ENCODE measurements at regions of chr1 and their contacts with region 1.

Region 1: GRCh38 chr1:35726450-35727433 is 8.1 kb upstream of the C1orf216 start:
- DNase-seq: no peak
- H3K4me3 ChIP-seq: no peak overlapping the region
- H3K27ac ChIP-seq: no peak overlapping the region
- H3K4me1 ChIP-seq: peaks cover 0 to 9% (median 8%) of the 10 kb centered on the region in 4 donors
- H3K27me3 ChIP-seq: no peaks in the 10 kb centered on the region
- CTCF ChIP-seq: peak; percentile 77 to 88 (median 79)
- EP300 ChIP-seq: no peak
- POLR2A ChIP-seq: no peak

Region 2: GRCh38 chr1:35451125-35451528 is 275.6 kb before region 1 on chr1:
- intact Hi-C with region 1: loop called (anchors 2 kb)
- DNase-seq: peak; percentile 94
- H3K4me3 ChIP-seq: no peak overlapping the region
- H3K27ac ChIP-seq: peak overlapping the region in 3 of 4 donors; percentile 35 to 56 (median 38)
- H3K4me1 ChIP-seq: peaks cover 27 to 43% (median 35%) of the 10 kb centered on the region in 4 donors
- H3K27me3 ChIP-seq: no peaks in the 10 kb centered on the region
- CTCF ChIP-seq: peak; percentile 75 to 91 (median 91)
- EP300 ChIP-seq: no peak
- POLR2A ChIP-seq: no peak

Region 3: DNA sequence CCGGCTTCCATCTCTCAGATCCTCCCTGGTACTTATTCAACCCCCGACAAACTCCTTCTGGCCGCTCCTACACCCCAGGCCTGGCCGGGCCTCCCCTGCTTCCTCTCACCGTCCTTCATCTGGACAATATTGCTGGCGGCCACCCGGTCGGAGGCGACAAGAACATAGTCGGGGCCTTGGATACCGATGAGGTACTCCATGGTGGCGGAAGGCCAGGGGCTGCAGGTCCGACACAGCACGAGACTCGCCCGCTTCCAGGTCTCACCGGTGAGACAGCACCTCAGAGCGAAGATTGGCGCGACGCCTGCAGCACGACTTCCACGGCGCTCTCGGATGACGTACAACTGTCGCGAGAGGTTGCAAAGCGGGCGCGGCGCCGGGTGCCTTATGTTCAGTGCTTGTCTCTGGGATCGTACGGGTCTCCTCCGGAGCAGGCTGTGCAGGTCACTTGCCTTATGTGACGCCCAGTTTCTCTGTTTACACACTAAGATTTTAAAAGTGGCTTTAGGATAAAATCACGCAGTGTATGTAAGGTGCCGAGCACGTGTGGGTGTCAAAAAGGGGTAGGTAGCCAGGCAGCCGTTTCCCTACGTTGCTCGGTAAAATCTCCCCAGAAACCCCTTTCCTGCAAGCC is 85.4 kb before region 1 on chr1 and contains the start of gene PSMB2:
- intact Hi-C with region 1: no loop called
- DNase-seq: peak; percentile 99
- H3K4me3 ChIP-seq: peak within 1 kb of the TSS; percentile 83 to 92 (median 86)
- H3K27ac ChIP-seq: peak within 1 kb of the TSS; percentile 89 to 95 (median 92)
- H3K4me1 ChIP-seq: peaks cover 29 to 50% (median 47%) of the 10 kb centered on the region in 4 donors
- H3K27me3 ChIP-seq: peaks cover 0 to 18% (median 0%) of the 10 kb centered on the region in 4 donors
- CTCF ChIP-seq: no peak
- EP300 ChIP-seq: no peak
- POLR2A ChIP-seq: peak; percentile 50
- total RNA-seq, gene PSMB2: 30.3 to 40.5 (median 32.4) TPM

Region 4: DNA sequence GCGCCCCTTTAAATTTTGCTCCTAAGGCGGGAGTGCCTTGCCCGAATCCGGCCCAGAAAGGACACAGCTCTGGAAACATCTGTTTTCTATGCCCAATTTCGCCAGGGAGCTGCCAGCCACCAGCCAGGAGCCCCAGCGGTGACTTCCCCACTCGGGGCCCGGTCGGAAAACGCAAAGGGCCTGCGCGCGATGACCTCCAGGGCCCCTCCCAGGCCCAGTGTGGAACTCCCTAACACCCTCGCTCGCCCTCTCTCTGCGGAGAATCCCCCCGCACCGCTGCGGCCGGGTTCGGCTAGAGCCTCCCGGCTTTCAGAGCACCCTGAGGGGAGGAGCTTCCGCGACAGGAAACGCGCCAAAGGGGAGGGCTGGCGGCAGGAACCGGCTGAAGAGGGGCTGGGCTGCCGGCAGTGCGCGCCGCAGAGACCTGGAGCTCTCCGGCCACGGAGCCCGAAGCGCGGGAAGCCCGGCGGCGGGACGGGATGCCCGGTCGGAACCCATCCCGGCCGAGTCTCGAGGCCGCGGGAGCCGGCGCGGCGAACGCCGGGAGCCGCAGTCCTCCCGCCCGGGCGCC is 42.5 kb after region 1 on chr1:
- intact Hi-C with region 1: loop called (anchors 1 kb)
- DNase-seq: peak; percentile 93
- H3K4me3 ChIP-seq: peak overlapping the region; percentile 64 to 89 (median 76)
- H3K27ac ChIP-seq: peak overlapping the region; percentile 75 to 81 (median 80)
- H3K4me1 ChIP-seq: peaks cover 0 to 20% (median 13%) of the 10 kb centered on the region in 4 donors
- H3K27me3 ChIP-seq: no peaks in the 10 kb centered on the region
- CTCF ChIP-seq: peak in 1 of 3 experiments; percentile 4
- EP300 ChIP-seq: no peak
- POLR2A ChIP-seq: no peak

Region 5: DNA sequence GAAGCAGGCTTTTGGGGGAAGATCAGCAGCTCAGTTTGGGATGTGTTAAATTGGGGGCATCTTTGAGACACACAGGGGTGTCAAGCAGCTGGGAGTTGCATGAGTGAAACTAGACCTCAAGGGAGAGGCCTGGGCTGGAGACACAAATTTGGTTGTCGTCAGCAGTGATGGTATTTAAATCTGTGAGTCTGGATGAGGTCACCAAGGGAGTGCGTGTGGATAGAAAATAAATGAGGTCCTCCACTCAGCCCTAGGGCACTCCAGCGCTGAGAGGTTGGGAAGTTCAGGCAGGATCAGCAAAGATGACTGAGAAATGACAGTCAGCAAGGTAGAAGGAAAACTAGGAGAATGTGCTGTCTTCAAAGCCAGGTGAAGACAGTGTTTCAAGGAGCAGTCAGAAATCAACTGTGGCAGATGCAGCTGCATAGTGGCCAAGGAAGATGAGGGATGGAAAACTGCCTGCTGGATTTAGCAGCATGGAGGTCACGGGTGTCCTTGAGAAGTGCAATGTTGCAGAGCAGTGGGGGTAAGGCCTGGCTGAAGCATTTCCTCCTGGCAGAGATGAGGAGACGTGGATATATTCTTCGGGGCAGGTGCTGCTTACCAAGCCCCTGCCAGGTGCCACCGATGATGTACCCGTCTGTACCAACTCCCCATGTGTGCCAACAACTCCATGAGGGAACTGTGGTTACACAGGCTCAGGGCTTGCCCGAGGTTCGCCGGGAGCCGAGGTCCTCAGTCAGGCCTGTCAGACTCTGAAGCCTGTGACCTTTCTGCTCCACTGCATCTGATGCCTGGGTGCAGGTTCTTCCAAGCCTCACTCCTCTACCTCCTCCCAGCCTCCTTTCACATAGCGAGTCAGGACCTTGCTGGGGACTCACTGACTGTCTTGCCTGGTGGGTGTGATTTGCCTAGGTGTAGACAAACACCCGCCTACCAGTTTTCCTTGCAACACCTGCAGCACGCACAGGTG is 440.5 kb after region 1 on chr1:
- intact Hi-C with region 1: no loop called
- DNase-seq: no peak
- H3K4me3 ChIP-seq: no peak overlapping the region
- H3K27ac ChIP-seq: peak overlapping the region; percentile 67 to 75 (median 72)
- H3K4me1 ChIP-seq: peaks cover 89 to 95% (median 91%) of the 10 kb centered on the region in 4 donors
- H3K27me3 ChIP-seq: no peaks in the 10 kb centered on the region
- CTCF ChIP-seq: no peak
- EP300 ChIP-seq: no peak
- POLR2A ChIP-seq: no peak

Measured in esophagus muscularis mucosa (tissue), 4 donors.